Caco-2 (cell line): ENCODE measurements at regions of chr1 and their contacts with region 1.

Region 1: GRCh38 chr1:47192458-47193384 is 2.9 kb upstream of the PDZK1IP1 start:
- DNase-seq: peak; percentile 87 to 88
- H3K4me3 ChIP-seq: peak overlapping the region; percentile 38
- H3K4me3 Mint-ChIP-seq: peak overlapping the region; percentile 94
- H3K27ac Mint-ChIP-seq: peak overlapping the region; percentile 98
- H3K4me1 ChIP-seq: peaks cover 55% of the 10 kb centered on the region
- H3K4me1 Mint-ChIP-seq: peaks cover 31% of the 10 kb centered on the region
- H3K27me3 ChIP-seq: no peaks in the 10 kb centered on the region
- H3K27me3 Mint-ChIP-seq: no peaks in the 10 kb centered on the region
- CTCF ChIP-seq: peak; percentile 80 to 84

Region 2: DNA sequence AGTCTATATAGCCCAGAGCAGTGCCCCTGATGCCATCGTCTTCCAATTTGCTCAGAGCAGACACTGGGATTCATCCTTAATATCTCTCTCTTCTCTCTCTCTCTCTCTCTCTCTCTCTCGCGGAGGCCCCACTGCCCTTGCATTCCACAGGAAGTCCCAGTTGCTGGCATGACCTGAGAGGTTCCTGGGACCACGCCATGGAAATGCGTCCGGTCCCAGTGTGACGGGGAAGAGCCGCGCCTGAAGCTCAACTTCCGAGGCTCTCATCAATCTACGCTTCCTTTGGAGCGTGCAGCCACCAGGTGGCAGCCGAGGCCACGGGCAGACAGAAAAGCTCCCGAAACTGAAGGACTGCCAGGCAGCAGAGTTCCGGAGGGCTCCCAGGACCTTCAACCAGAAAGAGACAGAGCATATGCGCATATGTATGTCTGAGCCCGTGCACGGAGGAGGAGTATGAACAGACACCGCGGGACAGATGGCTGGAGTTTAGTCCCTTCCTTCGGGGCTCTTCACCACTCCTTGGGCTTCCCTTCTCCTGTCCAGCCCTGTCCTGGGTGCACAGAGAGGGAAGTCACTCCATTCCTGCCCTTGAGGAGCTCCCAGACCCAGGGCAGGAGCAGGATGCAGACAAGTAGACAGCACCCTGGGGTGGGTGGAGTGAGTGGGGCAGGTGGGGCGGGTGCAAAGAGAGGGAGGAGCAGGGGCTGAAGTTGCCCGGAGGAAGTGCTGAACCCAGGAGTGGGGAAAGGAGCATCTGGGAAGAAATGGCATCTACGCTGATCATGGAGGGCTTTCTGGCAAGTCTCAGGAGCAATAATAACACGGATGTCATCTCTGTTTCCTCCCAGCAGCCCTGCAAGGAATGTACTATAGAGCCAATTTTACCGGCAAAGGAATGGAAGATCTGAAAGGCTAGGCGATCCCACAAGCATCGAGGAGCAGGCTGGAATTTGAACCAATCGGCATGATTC is 13.4 kb before region 1 on chr1:
- CTCF ChIA-PET with region 1: interaction called, 53 read pairs
- POLR2A ChIA-PET with region 1: interaction called, 12 read pairs
- intact Hi-C with region 1: loop called (anchors 1 kb)
- DNase-seq: peak; percentile 93
- H3K4me3 ChIP-seq: peak overlapping the region; percentile 26
- H3K4me3 Mint-ChIP-seq: peak overlapping the region; percentile 67
- H3K27ac Mint-ChIP-seq: peak overlapping the region; percentile 80
- H3K4me1 ChIP-seq: peaks cover 22% of the 10 kb centered on the region; the same call in 1 of the 2 replicates
- H3K4me1 Mint-ChIP-seq: peaks cover 28% of the 10 kb centered on the region
- H3K27me3 ChIP-seq: no peaks in the 10 kb centered on the region
- H3K27me3 Mint-ChIP-seq: no peaks in the 10 kb centered on the region
- CTCF ChIP-seq: peak; percentile 76 to 87

Region 3: GRCh38 chr1:47207811-47208373 is 15.2 kb after region 1 on chr1:
- CTCF ChIA-PET with region 1: no interaction called
- POLR2A ChIA-PET with region 1: no interaction called
- intact Hi-C with region 1: no loop called
- DNase-seq: no peak
- H3K4me3 ChIP-seq: no peak overlapping the region
- H3K4me3 Mint-ChIP-seq: no peak overlapping the region
- H3K27ac Mint-ChIP-seq: no peak overlapping the region
- H3K4me1 ChIP-seq: no peaks in the 10 kb centered on the region
- H3K4me1 Mint-ChIP-seq: peaks cover 6% of the 10 kb centered on the region
- H3K27me3 ChIP-seq: no peaks in the 10 kb centered on the region
- H3K27me3 Mint-ChIP-seq: no peaks in the 10 kb centered on the region
- CTCF ChIP-seq: no peak

Region 4: GRCh38 chr1:47231301-47232186 is 38.8 kb after region 1 on chr1:
- CTCF ChIA-PET with region 1: interaction called, 5 read pairs
- POLR2A ChIA-PET with region 1: no interaction called
- intact Hi-C with region 1: loop called (anchors 1 kb)
- DNase-seq: peak in 1 of 2 experiments; percentile 41
- H3K4me3 ChIP-seq: peak overlapping the region; percentile 73
- H3K4me3 Mint-ChIP-seq: peak overlapping the region; percentile 78
- H3K27ac Mint-ChIP-seq: peak overlapping the region; percentile 89
- H3K4me1 ChIP-seq: 0 out of 2 replicates have a peak, but pooled peaks cover 2% of the 10 kb centered on the region
- H3K4me1 Mint-ChIP-seq: peaks cover 8% of the 10 kb centered on the region
- H3K27me3 ChIP-seq: no peaks in the 10 kb centered on the region
- H3K27me3 Mint-ChIP-seq: no peaks in the 10 kb centered on the region
- CTCF ChIP-seq: no peak

Region 5: GRCh38 chr1:47262787-47263413 is 70.2 kb after region 1 on chr1:
- CTCF ChIA-PET with region 1: interaction called, 21 read pairs
- POLR2A ChIA-PET with region 1: interaction called, 6 read pairs
- intact Hi-C with region 1: loop called (anchors 1 kb)
- DNase-seq: peak; percentile 46 to 72
- H3K4me3 ChIP-seq: no peak overlapping the region
- H3K4me3 Mint-ChIP-seq: no peak overlapping the region
- H3K27ac Mint-ChIP-seq: no peak overlapping the region
- H3K4me1 ChIP-seq: 0 out of 2 replicates have a peak, but pooled peaks cover 5% of the 10 kb centered on the region
- H3K4me1 Mint-ChIP-seq: peaks cover 11% of the 10 kb centered on the region
- H3K27me3 ChIP-seq: no peaks in the 10 kb centered on the region
- H3K27me3 Mint-ChIP-seq: no peaks in the 10 kb centered on the region
- CTCF ChIP-seq: peak; percentile 58 to 62

Region 6: GRCh38 chr1:47333922-47334764 is 141.4 kb after region 1 on chr1:
- CTCF ChIA-PET with region 1: interaction called, 3 read pairs
- POLR2A ChIA-PET with region 1: interaction called, 4 read pairs
- intact Hi-C with region 1: loop called (anchors 1 kb)
- DNase-seq: peak; percentile 83
- H3K4me3 ChIP-seq: peak overlapping the region; percentile 85
- H3K4me3 Mint-ChIP-seq: no peak overlapping the region
- H3K27ac Mint-ChIP-seq: peak overlapping the region; percentile 93
- H3K4me1 ChIP-seq: no peaks in the 10 kb centered on the region; the same call in 1 of the 2 replicates
- H3K4me1 Mint-ChIP-seq: peaks cover 7% of the 10 kb centered on the region
- H3K27me3 ChIP-seq: no peaks in the 10 kb centered on the region
- H3K27me3 Mint-ChIP-seq: no peaks in the 10 kb centered on the region
- CTCF ChIP-seq: peak; percentile 12 to 28